CD14-positive monocyte (primary cell): ENCODE measurements at regions of chrX and their contacts with region 1.

Region 1: DNA sequence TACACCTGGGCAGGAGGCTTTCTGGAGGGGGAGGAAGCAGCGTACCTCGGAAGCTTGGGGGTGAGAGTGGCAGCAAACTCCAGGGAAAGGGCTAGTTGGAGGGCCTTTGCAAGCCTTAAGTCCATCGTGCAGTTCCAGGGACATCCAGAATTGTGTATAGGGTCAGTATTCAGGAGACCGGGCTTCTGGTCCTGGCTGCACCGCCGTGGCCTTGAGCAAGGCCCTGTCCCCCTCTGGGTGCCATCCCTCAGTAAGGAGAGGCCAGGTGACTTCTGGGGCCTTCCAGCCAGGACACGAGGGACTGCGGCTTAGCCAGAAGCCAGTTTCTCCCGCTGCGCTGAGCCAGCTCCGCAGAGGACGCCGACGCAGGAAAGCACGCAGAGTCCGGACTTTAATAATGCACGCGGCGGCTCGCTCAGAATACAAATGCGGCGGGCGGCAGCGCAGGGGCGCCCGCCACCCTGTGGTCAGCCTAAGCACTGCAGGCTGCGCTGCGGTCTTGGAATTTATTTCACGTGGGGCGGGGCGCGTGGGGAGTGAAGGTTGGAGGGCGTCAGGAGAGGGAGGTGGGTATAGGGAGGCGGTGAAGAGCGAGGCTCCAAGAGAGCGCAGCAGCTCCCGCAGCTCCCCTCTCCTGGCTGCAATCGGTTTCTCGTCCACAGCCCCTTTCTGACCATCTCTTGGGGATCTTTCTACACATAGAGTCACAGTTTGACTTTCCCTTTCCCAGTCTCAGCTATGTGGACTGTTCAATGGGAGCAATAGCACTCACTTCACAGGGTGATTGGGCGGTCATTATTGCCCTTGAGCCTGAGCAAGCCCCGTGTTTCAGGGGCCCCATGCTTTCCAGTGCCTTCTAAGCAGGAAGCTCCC is 94.1 kb upstream of the GPR50 start:
- DNase-seq: peak; percentile 18 to 32 (median 27)
- H3K4me3 ChIP-seq: no peak overlapping the region
- H3K4me3 Mint-ChIP-seq: peak overlapping the region in 1 of 2 donors; percentile 80
- H3K27ac ChIP-seq: no peak overlapping the region
- H3K27ac Mint-ChIP-seq: peak overlapping the region in 1 of 7 donors; percentile 10
- H3K4me1 ChIP-seq: peaks cover 5% of the 10 kb centered on the region in 2 donors
- H3K4me1 Mint-ChIP-seq: peaks cover 7% of the 10 kb centered on the region
- H3K27me3 ChIP-seq: peaks cover 0 to 7% of the 10 kb centered on the region in 2 donors
- H3K27me3 Mint-ChIP-seq: peaks cover 9 to 25% (median 11%) of the 10 kb centered on the region in 3 donors
- CTCF ChIP-seq: peak; percentile 77

Region 2: GRCh38 chrX:150772150-150772970 is 310.0 kb before region 1 on chrX:
- intact Hi-C with region 1: loop called (anchors 2 kb)
- DNase-seq: peak; percentile 48 to 61 (median 53)
- H3K4me3 ChIP-seq: no peak overlapping the region
- H3K4me3 Mint-ChIP-seq: no peak overlapping the region
- H3K27ac ChIP-seq: no peak overlapping the region
- H3K27ac Mint-ChIP-seq: no peak overlapping the region
- H3K4me1 ChIP-seq: peaks cover 13 to 20% of the 10 kb centered on the region in 2 donors
- H3K4me1 Mint-ChIP-seq: peaks cover 28% of the 10 kb centered on the region
- H3K27me3 ChIP-seq: no peaks in the 10 kb centered on the region
- H3K27me3 Mint-ChIP-seq: peaks cover 0 to 9% (median 2%) of the 10 kb centered on the region in 3 donors
- CTCF ChIP-seq: peak; percentile 70

Region 3: GRCh38 chrX:151019856-151020255 is 62.5 kb before region 1 on chrX:
- intact Hi-C with region 1: no loop called
- DNase-seq: no peak
- H3K4me3 ChIP-seq: no peak overlapping the region
- H3K4me3 Mint-ChIP-seq: no peak overlapping the region
- H3K27ac ChIP-seq: no peak overlapping the region
- H3K27ac Mint-ChIP-seq: no peak overlapping the region
- H3K4me1 ChIP-seq: no peaks in the 10 kb centered on the region
- H3K4me1 Mint-ChIP-seq: no peaks in the 10 kb centered on the region
- H3K27me3 ChIP-seq: no peaks in the 10 kb centered on the region
- H3K27me3 Mint-ChIP-seq: peaks cover 0 to 4% (median 0%) of the 10 kb centered on the region in 3 donors
- CTCF ChIP-seq: no peak

Region 4: DNA sequence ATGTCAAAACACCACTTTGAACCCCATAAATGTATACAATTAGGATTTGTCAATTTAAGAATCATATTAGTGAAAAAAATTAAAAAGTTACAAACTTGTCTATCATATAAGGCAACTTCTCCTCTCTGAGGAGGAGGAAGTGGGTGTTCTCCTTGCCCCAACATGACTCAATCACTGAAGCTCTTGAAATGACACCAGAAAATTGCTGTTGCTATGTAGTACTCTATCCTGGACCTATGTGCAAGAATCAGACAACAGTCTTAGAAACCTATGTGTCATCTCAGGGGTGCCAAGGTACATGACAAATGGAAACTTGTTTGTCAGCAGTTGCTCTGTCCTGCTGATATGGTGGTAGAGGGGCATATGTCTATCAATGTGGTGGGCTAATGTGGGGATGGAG is 51.5 kb before region 1 on chrX:
- intact Hi-C with region 1: loop called in 1 of 2 experiments (anchors 5 kb)
- DNase-seq: peak; percentile 29 to 64 (median 40)
- H3K4me3 ChIP-seq: no peak overlapping the region
- H3K4me3 Mint-ChIP-seq: no peak overlapping the region
- H3K27ac ChIP-seq: no peak overlapping the region
- H3K27ac Mint-ChIP-seq: peak overlapping the region in 6 of 7 donors; percentile 12 to 84 (median 67)
- H3K4me1 ChIP-seq: peaks cover 0 to 5% of the 10 kb centered on the region in 2 donors
- H3K4me1 Mint-ChIP-seq: peaks cover 15% of the 10 kb centered on the region
- H3K27me3 ChIP-seq: no peaks in the 10 kb centered on the region
- H3K27me3 Mint-ChIP-seq: peaks cover 0 to 2% (median 0%) of the 10 kb centered on the region in 3 donors
- CTCF ChIP-seq: no peak